MCF 10A (cell line): ENCODE measurements at regions of chr1 and their contacts with region 1.

Region 1: GRCh38 chr1:235367000-235367908 is at the start of gene TBCE:
- DNase-seq: peak; percentile 100
- H3K4me3 Mint-ChIP-seq: peak within 1 kb of the TSS; percentile 96
- H3K27ac Mint-ChIP-seq: peak within 1 kb of the TSS; percentile 94
- H3K4me1 Mint-ChIP-seq: peaks cover 26% of the 10 kb centered on the region
- H3K27me3 Mint-ChIP-seq: no peaks in the 10 kb centered on the region
- CTCF ChIP-seq: peak; percentile 16
- total RNA-seq, gene TBCE: 45.6 and 52.5 TPM in 2 replicates

Region 2: GRCh38 chr1:235253219-235253962 is 113.9 kb before region 1 on chr1:
- CTCF ChIA-PET with region 1: interaction called, 3 read pairs
- POLR2A ChIA-PET with region 1: interaction called, 13 read pairs
- intact Hi-C with region 1: no loop called
- DNase-seq: peak; percentile 95
- H3K4me3 Mint-ChIP-seq: no peak overlapping the region
- H3K27ac Mint-ChIP-seq: peak overlapping the region; percentile 49
- H3K4me1 Mint-ChIP-seq: peaks cover 10% of the 10 kb centered on the region
- H3K27me3 Mint-ChIP-seq: no peaks in the 10 kb centered on the region
- CTCF ChIP-seq: peak; percentile 98

Region 3: DNA sequence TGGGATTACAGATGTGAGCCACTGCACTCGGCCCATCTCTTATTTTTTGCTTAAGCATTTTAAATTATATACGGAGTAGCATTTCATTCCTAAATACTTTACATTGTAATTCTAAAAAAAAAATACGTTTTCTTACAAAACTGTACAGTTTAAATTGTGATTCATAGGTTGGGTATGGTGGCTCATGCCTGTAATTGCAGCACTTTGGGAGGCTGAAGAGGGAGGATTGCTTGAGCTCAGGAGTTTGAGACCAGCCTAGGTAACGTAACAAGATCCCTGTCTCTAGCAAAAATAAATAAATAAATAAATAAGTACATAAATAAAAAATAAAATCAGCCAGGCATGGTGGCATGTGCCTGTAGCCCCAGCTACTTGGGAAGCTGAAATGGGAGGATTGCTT is 24.6 kb after region 1 on chr1:
- CTCF ChIA-PET with region 1: interaction called, 6 read pairs
- POLR2A ChIA-PET with region 1: interaction called, 10 read pairs
- intact Hi-C with region 1: no loop called
- DNase-seq: peak; percentile 22
- H3K4me3 Mint-ChIP-seq: no peak overlapping the region
- H3K27ac Mint-ChIP-seq: no peak overlapping the region
- H3K4me1 Mint-ChIP-seq: peaks cover 3% of the 10 kb centered on the region
- H3K27me3 Mint-ChIP-seq: no peaks in the 10 kb centered on the region
- CTCF ChIP-seq: no peak